ENCODE measurements at regions of chr9 and their contacts with region 1.

Region 1: DNA sequence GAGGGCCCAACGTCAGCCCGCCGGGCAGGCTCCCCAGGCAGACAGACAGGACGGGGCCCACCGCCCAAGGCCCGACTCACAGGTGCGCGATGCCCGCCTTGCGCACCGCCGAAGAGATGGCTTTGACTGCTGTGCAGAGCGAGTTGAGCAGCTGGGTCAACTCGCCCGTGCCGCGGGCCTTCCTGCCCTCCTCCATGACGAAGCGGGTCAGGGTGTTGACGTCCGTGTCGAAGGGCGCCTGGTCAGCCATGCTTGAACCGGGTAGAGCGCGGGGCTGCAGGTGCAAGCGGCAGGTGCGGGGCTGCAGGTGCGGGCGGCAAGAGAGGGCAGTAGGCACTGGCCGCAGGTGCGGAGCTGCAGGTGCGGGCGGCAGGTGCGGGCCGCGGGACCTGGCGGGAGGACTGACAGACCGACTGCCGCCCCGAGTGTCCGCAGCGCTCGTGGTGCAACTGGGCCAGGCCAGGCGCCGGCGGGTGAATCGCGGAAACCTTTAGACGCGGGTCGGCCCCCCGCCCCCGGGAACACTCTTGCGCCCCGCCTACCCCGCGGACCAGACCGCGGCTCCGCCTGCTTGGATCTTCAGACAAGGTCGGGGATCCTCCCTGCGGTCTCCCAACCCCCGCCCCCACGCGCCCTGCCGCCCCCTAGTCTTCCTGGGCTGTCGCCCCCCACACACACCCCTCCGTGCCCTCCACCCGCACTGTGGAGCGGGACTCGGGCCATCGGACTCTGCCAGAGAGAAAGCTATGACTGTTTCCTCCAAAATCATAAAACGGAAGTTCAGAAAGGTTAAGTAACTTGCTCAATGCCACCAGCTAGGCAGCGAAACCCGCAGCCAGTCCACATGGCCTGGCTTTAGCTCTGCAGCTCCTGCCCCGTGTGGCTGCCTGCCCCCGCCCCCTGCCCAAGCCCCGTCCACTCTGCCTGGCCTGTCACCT is at the start of gene FBP1:
- DNase-seq: no peak
- ATAC-seq: peak; percentile 65; the same call in 1 of the 2 replicates
- H3K4me3 ChIP-seq: peak within 1 kb of the TSS; percentile 14 to 23; a peak in 3 of 4 replicates
- H3K27ac ChIP-seq: no peak within 1 kb of the TSS
- H3K4me1 ChIP-seq: no peaks in the 10 kb centered on the region
- H3K27me3 ChIP-seq: no peaks in the 10 kb centered on the region; the same call in 1 of the 2 replicates
- CTCF ChIP-seq: no peak
- total RNA-seq, gene FBP1: 0.36 TPM

Region 2: GRCh38 chr9:94697972-94698581 is 58.7 kb after region 1 on chr9:
- CTCF ChIA-PET with region 1: no interaction called
- POLR2A ChIA-PET with region 1: interaction called, 14 read pairs
- in situ Hi-C with region 1: no loop called
- intact Hi-C with region 1: no loop called
- DNase-seq: no peak
- ATAC-seq: no peak; the same call in 1 of the 2 replicates
- H3K4me3 ChIP-seq: no peak overlapping the region
- H3K27ac ChIP-seq: no peak overlapping the region
- H3K4me1 ChIP-seq: no peaks in the 10 kb centered on the region; the same call in 1 of the 2 replicates
- H3K27me3 ChIP-seq: no peaks in the 10 kb centered on the region
- CTCF ChIP-seq: no peak